SK-N-SH (cell line): ENCODE measurements at regions of chr3 and their contacts with region 1.

Region 1: GRCh38 chr3:151407926-151408325 is 23.4 kb upstream of the P2RY12 start:
- DNase-seq: no peak
- H3K4me3 ChIP-seq: no peak overlapping the region
- H3K27ac ChIP-seq: no peak overlapping the region
- H3K4me1 ChIP-seq: no peaks in the 10 kb centered on the region; a peak in 2 of 4 replicates
- H3K27me3 ChIP-seq: no peaks in the 10 kb centered on the region
- CTCF ChIP-seq: no peak
- EP300 ChIP-seq: no peak
- RAD21 ChIP-seq: no peak

Region 2: GRCh38 chr3:150822636-150823035 is 585.3 kb before region 1 on chr3:
- CTCF ChIA-PET with region 1: no interaction called
- POLR2A ChIA-PET with region 1: no interaction called
- DNase-seq: no peak
- H3K4me3 ChIP-seq: no peak overlapping the region
- H3K27ac ChIP-seq: no peak overlapping the region
- H3K4me1 ChIP-seq: peaks cover 0 to 5% of the 10 kb centered on the region in 2 experiments; a peak in 1 of 4 replicates
- H3K27me3 ChIP-seq: peaks cover 25% of the 10 kb centered on the region; the same call in 1 of the 2 replicates
- CTCF ChIP-seq: no peak
- EP300 ChIP-seq: no peak
- RAD21 ChIP-seq: no peak

Region 3: GRCh38 chr3:151425627-151426335 is 17.9 kb after region 1 on chr3:
- CTCF ChIA-PET with region 1: interaction called, 10 read pairs
- POLR2A ChIA-PET with region 1: no interaction called
- DNase-seq: no peak
- H3K4me3 ChIP-seq: no peak overlapping the region
- H3K27ac ChIP-seq: no peak overlapping the region
- H3K4me1 ChIP-seq: no peaks in the 10 kb centered on the region
- H3K27me3 ChIP-seq: no peaks in the 10 kb centered on the region
- CTCF ChIP-seq: peak; percentile 58
- EP300 ChIP-seq: no peak
- RAD21 ChIP-seq: no peak